GM12878 (cell line): ENCODE measurements at regions of chr2 and their contacts with region 1.

Region 1: GRCh38 chr2:10787176-10787968 is 25.2 kb downstream of the PDIA6 start:
- DNase-seq: no peak
- ATAC-seq: no peak
- H3K4me3 ChIP-seq: no peak overlapping the region
- H3K27ac ChIP-seq: no peak overlapping the region
- H3K4me1 ChIP-seq: peaks cover 12% of the 10 kb centered on the region
- H3K27me3 ChIP-seq: no peaks in the 10 kb centered on the region
- CTCF ChIP-seq: peak; percentile 32 to 50 (median 45)
- EP300 ChIP-seq: no peak
- POLR2A ChIP-seq: no peak
- RAD21 ChIP-seq: peak; percentile 59

Region 2: GRCh38 chr2:10382354-10383061 is 404.9 kb before region 1 on chr2:
- CTCF ChIA-PET with region 1: no interaction called
- POLR2A ChIA-PET with region 1: no interaction called
- RAD21 ChIA-PET with region 1: no interaction called
- SMC1A ChIA-PET with region 1: no interaction called
- in situ Hi-C with region 1: no loop called
- intact Hi-C with region 1: no loop called
- DNase-seq: peak; percentile 60
- ATAC-seq: peak; percentile 84
- H3K4me3 ChIP-seq: no peak overlapping the region
- H3K27ac ChIP-seq: no peak overlapping the region
- H3K4me1 ChIP-seq: peaks cover 29% of the 10 kb centered on the region
- H3K27me3 ChIP-seq: no peaks in the 10 kb centered on the region
- CTCF ChIP-seq: no peak
- EP300 ChIP-seq: no peak
- POLR2A ChIP-seq: no peak
- RAD21 ChIP-seq: no peak

Region 3: DNA sequence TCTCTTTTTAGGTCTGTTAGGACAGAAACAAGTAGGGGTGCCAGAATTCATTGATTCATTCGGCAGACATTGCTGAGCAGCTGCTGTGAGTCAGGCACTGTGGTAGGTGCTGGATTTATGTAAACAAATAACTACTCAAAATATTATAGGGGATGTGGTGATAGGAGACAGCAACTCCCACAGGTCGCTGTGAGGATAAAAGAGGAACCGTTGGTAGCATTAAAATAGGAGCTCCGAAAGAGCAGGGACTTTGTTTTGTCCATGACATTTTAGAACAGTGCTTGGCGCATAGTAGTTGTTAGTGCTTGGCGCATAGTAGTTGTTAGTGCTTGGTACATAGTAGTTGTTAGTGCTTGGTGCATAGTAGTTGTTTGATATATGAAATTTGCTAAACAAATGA is 36.8 kb before region 1 on chr2:
- CTCF ChIA-PET with region 1: no interaction called
- POLR2A ChIA-PET with region 1: no interaction called
- RAD21 ChIA-PET with region 1: no interaction called
- SMC1A ChIA-PET with region 1: interaction called, 3 read pairs
- in situ Hi-C with region 1: no loop called
- intact Hi-C with region 1: loop called (anchors 2 kb)
- DNase-seq: no peak
- ATAC-seq: no peak
- H3K4me3 ChIP-seq: no peak overlapping the region
- H3K27ac ChIP-seq: no peak overlapping the region
- H3K4me1 ChIP-seq: peaks cover 4% of the 10 kb centered on the region
- H3K27me3 ChIP-seq: no peaks in the 10 kb centered on the region
- CTCF ChIP-seq: no peak
- EP300 ChIP-seq: no peak
- POLR2A ChIP-seq: no peak
- RAD21 ChIP-seq: no peak

Region 4: DNA sequence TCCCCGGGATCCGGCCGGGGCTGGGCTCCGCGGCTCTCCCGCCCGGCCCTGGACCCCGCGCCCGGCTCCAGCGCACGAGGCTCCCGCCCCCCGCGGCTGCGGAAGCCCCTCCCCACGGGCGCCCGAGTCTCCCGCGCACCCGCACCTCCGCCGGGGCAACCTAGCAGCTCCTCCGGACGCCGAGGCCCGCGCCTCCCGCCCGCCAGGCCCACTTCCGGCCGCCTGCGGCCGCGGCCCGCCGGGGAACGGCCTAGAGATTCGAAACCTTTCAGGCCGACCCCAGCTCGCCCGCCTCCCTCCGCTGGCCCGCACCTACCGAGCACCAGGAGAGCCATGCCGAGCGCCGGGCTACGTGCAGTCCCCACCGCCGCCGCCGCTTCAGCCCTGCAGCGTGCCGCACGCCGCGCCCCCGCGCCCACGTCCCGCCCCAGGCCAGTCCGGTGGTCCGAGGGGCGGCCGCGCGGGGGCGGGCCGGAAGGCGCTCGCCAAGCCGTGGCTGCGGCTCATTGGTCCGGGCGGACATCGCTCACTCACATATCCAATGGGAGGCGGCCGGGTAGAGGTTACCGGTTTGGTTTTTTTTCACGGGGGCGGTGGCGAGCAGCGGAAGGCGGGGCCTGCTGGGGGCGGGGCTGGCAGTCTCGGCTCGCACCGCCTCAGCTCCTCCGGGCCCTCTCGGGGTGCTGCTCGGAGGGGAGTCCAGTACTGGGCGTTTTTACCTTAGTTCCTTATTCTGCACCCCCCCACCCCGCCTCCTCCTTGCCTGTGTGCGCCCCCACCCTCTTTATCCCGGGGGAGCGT is 25.2 kb after region 1 on chr2 and contains the start of gene PDIA6:
- CTCF ChIA-PET with region 1: interaction called, 5 read pairs
- POLR2A ChIA-PET with region 1: interaction called, 7 read pairs
- RAD21 ChIA-PET with region 1: interaction called, 5 read pairs
- SMC1A ChIA-PET with region 1: interaction called, 4 read pairs
- in situ Hi-C with region 1: no loop called
- intact Hi-C with region 1: loop called (anchors 2 kb)
- DNase-seq: peak; percentile 81
- ATAC-seq: peak; percentile 94
- H3K4me3 ChIP-seq: peak within 1 kb of the TSS; percentile 90
- H3K27ac ChIP-seq: peak within 1 kb of the TSS; percentile 85
- H3K4me1 ChIP-seq: peaks cover 3% of the 10 kb centered on the region
- H3K27me3 ChIP-seq: no peaks in the 10 kb centered on the region; a peak in 2 of 4 replicates
- CTCF ChIP-seq: no peak
- EP300 ChIP-seq: no peak
- POLR2A ChIP-seq: peak; percentile 86
- RAD21 ChIP-seq: no peak
- polyA plus RNA-seq, gene PDIA6: 180 to 234 TPM

Region 5: DNA sequence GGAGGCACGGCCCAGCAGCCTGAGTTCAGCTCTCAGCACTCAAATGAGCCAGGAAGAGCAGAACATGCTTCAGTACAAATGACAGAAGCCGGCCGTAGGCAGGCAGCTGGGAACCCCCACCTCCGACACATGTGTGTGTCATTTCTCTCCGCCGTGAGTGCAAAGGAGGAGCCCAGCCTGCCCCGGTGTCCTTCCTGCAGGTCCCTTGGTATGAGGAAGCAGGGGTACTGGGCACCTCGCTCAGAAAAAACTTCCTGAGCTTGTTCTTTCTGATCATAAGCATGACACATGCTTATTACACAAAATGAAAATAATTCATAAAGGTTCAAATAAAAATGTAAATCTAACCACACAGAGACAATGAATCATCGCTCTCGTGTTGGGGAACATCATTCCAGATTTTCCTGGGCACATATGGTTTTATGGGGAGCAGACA is 159.7 kb after region 1 on chr2:
- CTCF ChIA-PET with region 1: no interaction called
- POLR2A ChIA-PET with region 1: no interaction called
- RAD21 ChIA-PET with region 1: no interaction called
- SMC1A ChIA-PET with region 1: no interaction called
- in situ Hi-C with region 1: no loop called
- intact Hi-C with region 1: no loop called
- DNase-seq: no peak
- ATAC-seq: no peak
- H3K4me3 ChIP-seq: no peak overlapping the region
- H3K27ac ChIP-seq: no peak overlapping the region
- H3K4me1 ChIP-seq: no peaks in the 10 kb centered on the region
- H3K27me3 ChIP-seq: no peaks in the 10 kb centered on the region; a peak in 1 of 4 replicates
- CTCF ChIP-seq: no peak
- EP300 ChIP-seq: no peak
- POLR2A ChIP-seq: no peak
- RAD21 ChIP-seq: no peak

Region 6: DNA sequence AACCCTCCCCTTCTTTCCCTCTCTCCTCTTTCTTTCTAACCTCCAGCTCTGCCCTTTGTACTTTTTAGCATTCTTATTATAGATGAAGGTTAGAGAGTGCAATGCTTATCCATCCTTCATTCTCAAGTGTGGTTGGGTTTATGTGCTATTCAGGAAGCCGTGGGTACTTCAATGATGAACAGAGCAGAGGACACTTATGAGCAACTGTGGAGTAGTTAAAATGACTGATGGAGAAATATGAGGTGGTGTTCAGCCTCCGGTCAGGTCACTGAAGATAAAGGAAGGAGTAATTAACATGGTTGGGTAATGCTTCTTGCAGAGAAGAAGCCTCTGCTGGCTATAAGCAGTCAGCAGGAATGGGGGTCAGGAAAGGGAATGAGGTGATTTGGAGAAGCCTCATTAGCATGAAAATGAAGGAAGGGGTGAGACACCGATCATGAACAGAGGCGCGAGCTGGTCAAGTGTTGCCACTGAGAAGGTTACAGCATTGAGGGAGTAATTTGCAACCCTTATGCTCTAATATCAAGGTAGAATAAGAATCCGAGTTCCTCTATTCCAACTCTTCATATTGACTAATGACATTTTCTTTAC is 1133.7 kb after region 1 on chr2:
- CTCF ChIA-PET with region 1: no interaction called
- POLR2A ChIA-PET with region 1: no interaction called
- RAD21 ChIA-PET with region 1: no interaction called
- SMC1A ChIA-PET with region 1: no interaction called
- in situ Hi-C with region 1: no loop called
- intact Hi-C with region 1: no loop called
- DNase-seq: no peak
- ATAC-seq: no peak; the same call in 2 of the 3 replicates
- H3K4me3 ChIP-seq: no peak overlapping the region
- H3K27ac ChIP-seq: no peak overlapping the region
- H3K4me1 ChIP-seq: no peaks in the 10 kb centered on the region
- H3K27me3 ChIP-seq: no peaks in the 10 kb centered on the region
- CTCF ChIP-seq: no peak
- EP300 ChIP-seq: no peak
- POLR2A ChIP-seq: no peak
- RAD21 ChIP-seq: no peak